ENCODE measurements at regions of chr5 and their contacts with region 1.

Region 1: GRCh38 chr5:124741711-124742496 is 4.5 kb downstream of the ZNF608 start:
- DNase-seq: peak in 1 of 10 donors; percentile 15

Region 2: GRCh38 chr5:124655922-124656511 is 85.9 kb before region 1 on chr5:
- intact Hi-C with region 1: loop called (anchors 5 kb)
- DNase-seq: no peak